A673 (cell line): ENCODE measurements at regions of chr7 and their contacts with region 1.

Region 1: DNA sequence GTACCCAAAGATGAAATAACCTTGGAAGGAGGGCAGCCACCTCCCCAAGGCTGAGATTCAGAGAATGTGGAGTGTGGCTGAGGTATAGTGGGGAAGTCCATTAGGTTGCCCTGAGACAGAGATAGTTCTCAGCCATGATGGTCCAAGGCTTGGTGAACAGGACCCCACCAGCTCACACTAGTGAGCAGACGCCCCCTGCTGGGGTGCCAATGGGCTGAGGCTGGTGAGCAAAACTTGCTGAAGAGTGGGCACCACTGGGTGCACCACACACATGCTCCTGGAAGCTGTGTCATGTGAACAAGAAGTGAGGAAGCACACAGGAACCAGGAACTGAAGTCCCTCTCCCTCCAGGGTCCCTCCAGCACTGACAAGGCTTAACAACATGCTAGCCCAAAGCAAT is 8.9 kb downstream of the FBXL13 start:
- DNase-seq: peak; percentile 80
- H3K4me3 ChIP-seq: no peak overlapping the region
- H3K27ac ChIP-seq: no peak overlapping the region
- H3K4me1 ChIP-seq: no peaks in the 10 kb centered on the region
- H3K27me3 ChIP-seq: no peaks in the 10 kb centered on the region
- CTCF ChIP-seq: peak; percentile 74

Region 2: GRCh38 chr7:102927303-102927933 is 138.2 kb before region 1 on chr7:
- CTCF ChIA-PET with region 1: interaction called, 10 read pairs
- POLR2A ChIA-PET with region 1: no interaction called
- intact Hi-C with region 1: no loop called
- DNase-seq: no peak
- H3K4me3 ChIP-seq: no peak overlapping the region
- H3K27ac ChIP-seq: no peak overlapping the region
- H3K4me1 ChIP-seq: peaks cover 11% of the 10 kb centered on the region
- H3K27me3 ChIP-seq: no peaks in the 10 kb centered on the region
- CTCF ChIP-seq: no peak

Region 3: GRCh38 chr7:102992938-102993700 is 72.5 kb before region 1 on chr7:
- CTCF ChIA-PET with region 1: interaction called, 10 read pairs
- POLR2A ChIA-PET with region 1: no interaction called
- intact Hi-C with region 1: no loop called
- DNase-seq: no peak
- H3K4me3 ChIP-seq: no peak overlapping the region
- H3K27ac ChIP-seq: no peak overlapping the region
- H3K4me1 ChIP-seq: peaks cover 22% of the 10 kb centered on the region
- H3K27me3 ChIP-seq: no peaks in the 10 kb centered on the region
- CTCF ChIP-seq: no peak

Region 4: GRCh38 chr7:103317016-103317415 is 251.3 kb after region 1 on chr7:
- CTCF ChIA-PET with region 1: no interaction called
- POLR2A ChIA-PET with region 1: no interaction called
- intact Hi-C with region 1: no loop called
- DNase-seq: no peak
- H3K4me3 ChIP-seq: no peak overlapping the region
- H3K27ac ChIP-seq: no peak overlapping the region
- H3K4me1 ChIP-seq: no peaks in the 10 kb centered on the region
- H3K27me3 ChIP-seq: no peaks in the 10 kb centered on the region
- CTCF ChIP-seq: no peak